K562 (cell line): ENCODE measurements at regions of chr13 and their contacts with region 1.

Region 1: DNA sequence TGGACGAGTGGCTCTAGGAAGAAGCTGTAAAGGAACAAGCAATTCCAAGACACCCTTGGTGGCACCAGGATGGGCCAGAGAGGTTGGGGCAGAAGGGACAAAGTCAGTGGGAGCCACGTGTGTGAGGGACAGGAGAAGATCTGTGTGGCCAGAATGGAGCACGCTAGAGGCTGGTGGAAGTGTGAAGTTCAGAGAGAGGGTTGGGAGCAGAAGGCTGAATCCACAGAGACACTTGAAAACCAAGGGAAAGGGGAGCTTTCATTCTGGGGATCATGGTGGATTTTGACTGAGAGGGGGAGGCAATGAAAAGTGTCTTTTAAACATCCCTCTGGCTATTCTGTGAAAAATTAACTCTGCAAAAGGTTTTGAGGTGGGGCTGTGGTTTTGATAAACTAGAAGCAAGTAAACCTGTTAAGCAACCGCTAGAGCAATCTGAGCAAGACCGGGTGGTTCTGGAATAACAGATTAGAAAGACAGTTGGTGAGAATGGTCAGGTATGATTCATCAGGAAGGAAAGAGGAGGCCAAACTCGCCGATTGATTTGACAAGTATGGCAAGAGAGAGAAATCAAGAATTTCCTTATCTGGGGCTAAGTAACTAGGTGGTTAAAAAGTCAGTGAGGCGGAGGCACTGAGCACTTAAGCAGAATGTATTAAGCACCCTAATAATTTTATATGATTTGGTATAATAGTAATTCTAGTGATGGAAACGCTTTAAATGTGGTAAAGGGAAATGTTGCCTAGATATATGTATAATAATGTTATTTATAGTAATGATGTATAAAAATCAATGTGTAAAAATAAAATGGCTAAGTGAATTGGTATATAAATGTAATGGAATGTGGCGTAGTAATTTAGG is 140.0 kb downstream of the MYO16 start:
- DNase-seq: peak; percentile 53 to 89 (median 66)
- ATAC-seq: peak; percentile 94
- H3K4me3 ChIP-seq: no peak overlapping the region
- H3K27ac ChIP-seq: peak overlapping the region; percentile 99
- H3K4me1 ChIP-seq: peaks cover 0 to 18% of the 10 kb centered on the region in 2 experiments; a peak in 2 of 5 replicates
- H3K27me3 ChIP-seq: no peaks in the 10 kb centered on the region
- CTCF ChIP-seq: no peak
- EP300 ChIP-seq: peak; percentile 99
- POLR2A ChIP-seq: no peak
- RAD21 ChIP-seq: peak in 1 of 2 experiments; percentile 14; a peak in 1 of 4 replicates

Region 2: DNA sequence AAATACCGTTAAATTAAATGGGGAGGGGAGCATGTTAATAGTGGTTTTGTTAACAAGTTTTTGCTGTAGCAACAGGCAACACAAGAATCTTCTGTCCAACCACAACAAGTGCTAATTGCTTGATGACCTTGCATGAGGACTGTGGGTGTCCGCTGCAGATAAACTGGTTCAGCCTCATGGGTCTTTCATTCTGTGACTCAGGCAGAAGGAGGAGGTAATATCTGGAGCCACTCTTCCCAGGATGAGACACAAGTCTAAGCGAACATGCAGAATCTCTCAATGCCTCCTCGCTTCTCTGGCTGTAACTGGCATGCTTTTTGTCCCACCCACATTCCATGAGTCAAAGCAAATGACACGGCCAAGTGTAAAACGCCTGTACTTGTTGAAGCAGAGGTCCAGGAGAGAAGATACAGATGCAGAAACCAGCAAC is 196.6 kb before region 1 on chr13:
- CTCF ChIA-PET with region 1: no interaction called
- POLR2A ChIA-PET with region 1: no interaction called
- in situ Hi-C with region 1: no loop called
- intact Hi-C with region 1: loop called (anchors 5 kb)
- DNase-seq: peak; percentile 15 to 84 (median 42)
- ATAC-seq: peak; percentile 95
- H3K4me3 ChIP-seq: no peak overlapping the region
- H3K27ac ChIP-seq: peak overlapping the region; percentile 78
- H3K4me1 ChIP-seq: peaks cover 5 to 15% of the 10 kb centered on the region in 2 experiments; a peak in 4 of 5 replicates
- H3K27me3 ChIP-seq: no peaks in the 10 kb centered on the region
- CTCF ChIP-seq: no peak
- EP300 ChIP-seq: peak; percentile 56; the same call in 1 of the 2 replicates
- POLR2A ChIP-seq: no peak
- RAD21 ChIP-seq: no peak

Region 3: DNA sequence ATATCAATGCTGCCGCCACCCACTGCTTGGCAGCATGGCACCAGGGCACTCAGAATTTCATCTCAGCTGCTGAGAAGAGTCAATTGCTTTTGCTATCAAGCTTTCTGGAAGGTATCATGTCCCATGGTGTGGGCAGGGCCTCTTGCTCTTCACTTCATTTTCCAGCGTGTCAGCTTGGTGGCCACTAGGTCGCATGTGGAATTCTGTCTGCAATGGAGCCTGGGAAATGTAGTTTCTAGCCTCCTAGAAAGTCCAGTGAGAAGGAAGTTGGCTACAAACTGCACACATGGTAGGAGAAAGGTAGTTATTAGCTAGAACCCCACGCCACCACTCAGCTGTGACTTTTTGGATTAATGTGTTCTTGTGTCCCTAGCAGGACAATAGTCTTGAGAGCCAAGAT is 34.8 kb before region 1 on chr13:
- CTCF ChIA-PET with region 1: no interaction called
- POLR2A ChIA-PET with region 1: no interaction called
- in situ Hi-C with region 1: no loop called
- intact Hi-C with region 1: no loop called
- DNase-seq: peak in 2 of 4 experiments; percentile 9 to 49
- ATAC-seq: peak; percentile 96
- H3K4me3 ChIP-seq: no peak overlapping the region
- H3K27ac ChIP-seq: no peak overlapping the region
- H3K4me1 ChIP-seq: no peaks in the 10 kb centered on the region
- H3K27me3 ChIP-seq: no peaks in the 10 kb centered on the region
- CTCF ChIP-seq: no peak
- EP300 ChIP-seq: no peak
- POLR2A ChIP-seq: no peak
- RAD21 ChIP-seq: no peak